ENCODE measurements at regions of chr5 and their contacts with region 1.

Region 1: DNA sequence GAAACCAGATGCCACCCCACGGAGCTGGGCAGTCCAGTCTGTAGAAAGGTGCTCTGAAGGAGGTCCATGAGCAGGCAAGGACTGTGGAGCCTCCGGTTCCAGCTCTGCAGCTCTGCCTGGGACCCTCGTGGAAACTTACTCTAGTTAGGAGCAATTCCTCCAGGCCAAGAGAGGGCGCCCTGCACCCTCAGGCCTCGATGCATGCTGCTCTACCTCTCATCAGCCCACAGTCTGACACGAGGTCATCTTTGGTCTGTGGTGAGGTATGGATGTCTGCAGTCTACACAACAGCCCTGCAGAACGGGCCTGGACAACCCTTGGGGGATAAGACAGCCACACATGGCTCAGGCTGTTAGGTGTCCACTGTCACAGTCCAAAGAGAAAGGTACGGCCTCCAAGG is 50.6 kb upstream of the UBTD2 start:
- DNase-seq: peak; percentile 17 to 64
- H3K4me3 ChIP-seq: no peak overlapping the region
- H3K27ac ChIP-seq: no peak overlapping the region
- H3K4me1 ChIP-seq: no peaks in the 10 kb centered on the region
- H3K27me3 ChIP-seq: no peaks in the 10 kb centered on the region
- CTCF ChIP-seq: peak; percentile 65 to 80 (median 75)
- EP300 ChIP-seq: no peak
- POLR2A ChIP-seq: no peak
- RAD21 ChIP-seq: peak; percentile 35 to 50

Region 2: GRCh38 chr5:172255444-172255843 is 78.8 kb before region 1 on chr5:
- CTCF ChIA-PET with region 1: no interaction called
- POLR2A ChIA-PET with region 1: no interaction called
- DNase-seq: no peak
- H3K4me3 ChIP-seq: no peak overlapping the region
- H3K27ac ChIP-seq: no peak overlapping the region
- H3K4me1 ChIP-seq: no peaks in the 10 kb centered on the region
- H3K27me3 ChIP-seq: no peaks in the 10 kb centered on the region
- CTCF ChIP-seq: no peak
- EP300 ChIP-seq: no peak
- POLR2A ChIP-seq: no peak
- RAD21 ChIP-seq: no peak

Region 3: GRCh38 chr5:172350212-172351181 is 16.3 kb after region 1 on chr5:
- CTCF ChIA-PET with region 1: interaction called, 10 read pairs
- POLR2A ChIA-PET with region 1: interaction called, 3 read pairs
- DNase-seq: no peak
- H3K4me3 ChIP-seq: no peak overlapping the region
- H3K27ac ChIP-seq: no peak overlapping the region
- H3K4me1 ChIP-seq: no peaks in the 10 kb centered on the region
- H3K27me3 ChIP-seq: no peaks in the 10 kb centered on the region
- CTCF ChIP-seq: no peak
- EP300 ChIP-seq: no peak
- POLR2A ChIP-seq: no peak
- RAD21 ChIP-seq: no peak

Measured in H1 (cell line).